ENCODE measurements at regions of chr13 and their contacts with region 1.

Region 1: DNA sequence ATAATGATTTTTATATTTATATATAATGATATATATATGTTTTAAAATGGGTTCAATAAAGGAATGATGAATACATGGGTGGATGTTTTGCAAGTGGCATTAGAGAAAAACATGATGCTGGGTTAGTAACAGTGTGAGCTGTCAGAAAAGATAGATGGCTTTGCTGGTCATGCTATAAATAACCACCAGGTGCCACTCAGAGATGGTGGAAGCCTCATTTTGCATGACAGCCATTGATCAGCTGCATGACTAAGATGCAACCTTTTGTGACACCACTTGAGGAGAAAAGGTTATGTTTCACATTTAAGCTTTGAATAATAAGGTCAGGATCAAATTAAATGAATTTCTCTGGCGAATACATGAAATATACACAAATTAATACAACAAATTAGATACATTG is 737.7 kb downstream of the PCDH9 start:
- DNase-seq: no peak

Region 2: GRCh38 chr13:66513728-66514127 is 21.2 kb after region 1 on chr13:
- intact Hi-C with region 1: loop called (anchors 1 kb)
- DNase-seq: no peak

Region 3: DNA sequence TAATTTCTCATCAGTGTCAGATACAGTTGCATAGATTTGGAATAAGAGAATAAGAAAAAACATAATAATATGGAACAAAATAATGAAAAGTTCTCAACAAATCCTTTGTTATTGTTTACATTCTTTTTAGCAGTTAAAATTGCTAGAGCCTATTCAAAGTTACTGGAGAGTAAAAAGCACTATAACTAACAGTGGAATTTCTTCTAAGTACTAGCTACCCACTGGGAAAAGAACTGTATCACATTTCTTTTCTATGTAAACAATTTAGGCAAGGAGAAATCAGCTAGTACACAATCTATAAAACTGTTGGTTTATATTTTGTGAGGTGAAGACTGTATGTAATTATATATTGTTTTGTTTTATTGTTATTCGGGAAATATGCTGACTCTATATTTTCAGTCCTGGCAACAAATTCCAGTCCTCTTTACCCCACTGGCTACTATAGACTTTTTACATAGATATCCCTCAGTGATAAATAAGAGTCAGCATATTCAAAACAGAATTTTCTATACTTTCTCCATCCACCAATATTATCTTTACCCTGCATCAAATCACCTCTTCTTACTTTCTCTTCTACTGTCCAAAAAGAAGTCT is 515.7 kb after region 1 on chr13:
- intact Hi-C with region 1: no loop called
- DNase-seq: no peak